Posterior vena cava (tissue), 2 donors: ENCODE measurements at regions of chr4 and their contacts with region 1.

Region 1: GRCh38 chr4:77308843-77309242 is 151.8 kb downstream of the CCNG2 start:
- DNase-seq: no peak

Region 2: DNA sequence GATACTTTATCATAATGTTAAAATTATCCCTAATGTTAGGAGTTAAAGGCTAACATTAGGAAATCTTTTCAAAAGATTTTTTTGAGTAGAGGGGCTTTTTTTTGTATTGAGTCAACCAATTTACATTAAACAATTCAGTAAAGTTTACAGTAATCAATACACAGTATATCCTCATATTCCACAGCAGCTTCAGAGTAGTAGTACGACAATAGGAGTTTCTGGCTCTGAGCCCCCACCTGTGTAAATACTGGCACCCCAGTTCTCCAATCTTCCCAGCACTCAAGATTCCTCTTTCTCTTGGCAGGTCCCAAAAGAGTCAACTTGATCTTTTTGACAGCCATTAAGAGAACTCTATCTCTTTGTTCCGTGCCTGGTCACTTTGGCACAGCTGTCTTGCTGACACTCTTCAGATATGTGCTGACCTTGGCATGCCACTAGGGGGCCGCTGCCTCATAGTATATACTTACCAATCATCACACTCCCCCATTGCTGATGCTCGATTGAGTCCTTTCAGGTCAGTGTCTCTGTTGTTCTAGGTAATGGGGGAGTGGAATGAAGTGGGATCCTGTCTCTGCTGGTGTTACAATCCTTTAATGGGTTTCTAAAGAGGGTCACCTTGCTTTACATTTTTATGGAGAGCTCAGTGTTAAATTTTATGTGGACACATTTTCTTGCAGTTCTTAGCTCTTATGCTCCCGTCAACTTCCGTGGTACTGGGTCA is 213.6 kb before region 1 on chr4:
- intact Hi-C with region 1: loop called in 1 of 2 experiments (anchors 5 kb)
- DNase-seq: peak; percentile 89